ENCODE measurements at regions of chr6 and their contacts with region 1.

Region 1: GRCh38 chr6:89819336-89820130 is at the start of gene MDN1:
- DNase-seq: peak; percentile 80 to 90 (median 89)
- H3K4me3 ChIP-seq: peak within 1 kb of the TSS; percentile 85
- H3K4me3 Mint-ChIP-seq: peak within 1 kb of the TSS; percentile 88 to 98 (median 96)
- H3K27ac ChIP-seq: peak within 1 kb of the TSS; percentile 78
- H3K27ac Mint-ChIP-seq: peak within 1 kb of the TSS; percentile 90 to 98 (median 95)
- H3K4me1 ChIP-seq: peaks cover 16% of the 10 kb centered on the region
- H3K4me1 Mint-ChIP-seq: peaks cover 28 to 42% (median 40%) of the 10 kb centered on the region in 3 donors
- H3K27me3 ChIP-seq: no peaks in the 10 kb centered on the region
- H3K27me3 Mint-ChIP-seq: peaks cover 0 to 2% of the 10 kb centered on the region in 2 donors
- total RNA-seq, gene MDN1: 63.3 to 63.6 TPM

Region 2: DNA sequence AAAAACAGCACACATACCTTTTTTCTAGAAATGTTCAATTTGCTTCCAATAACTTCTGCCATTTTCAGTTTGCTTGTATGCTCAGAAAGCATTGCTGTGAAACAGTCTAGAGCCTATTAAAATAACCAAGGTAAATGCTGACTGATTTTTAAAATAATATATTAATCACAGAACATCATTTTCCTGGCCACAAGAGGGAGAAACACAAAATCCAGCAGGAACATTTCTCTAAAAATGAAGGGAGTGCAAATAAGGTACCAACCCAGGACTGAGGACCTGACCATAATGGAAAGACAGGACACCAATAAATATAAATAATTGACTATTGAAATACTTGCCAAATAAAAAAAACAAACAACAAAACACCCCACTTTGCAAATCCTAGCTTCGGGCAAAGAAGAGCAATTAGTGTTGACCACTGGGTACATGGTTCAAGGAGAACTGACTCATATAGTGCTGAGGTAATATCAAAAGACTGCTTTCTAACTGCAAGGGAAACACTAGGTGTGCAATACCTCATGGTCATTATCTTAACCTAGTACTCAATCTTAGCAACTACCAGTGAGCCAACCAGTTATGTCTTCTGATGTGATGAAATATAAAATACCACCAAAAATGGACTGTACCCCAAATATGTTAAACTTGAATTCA is 42.8 kb before region 1 on chr6:
- CTCF ChIA-PET with region 1: no interaction called
- POLR2A ChIA-PET with region 1: no interaction called
- DNase-seq: no peak
- H3K4me3 ChIP-seq: no peak overlapping the region
- H3K4me3 Mint-ChIP-seq: no peak overlapping the region
- H3K27ac ChIP-seq: no peak overlapping the region
- H3K27ac Mint-ChIP-seq: no peak overlapping the region
- H3K4me1 ChIP-seq: no peaks in the 10 kb centered on the region
- H3K4me1 Mint-ChIP-seq: no peaks in the 10 kb centered on the region
- H3K27me3 ChIP-seq: no peaks in the 10 kb centered on the region
- H3K27me3 Mint-ChIP-seq: no peaks in the 10 kb centered on the region

Region 3: DNA sequence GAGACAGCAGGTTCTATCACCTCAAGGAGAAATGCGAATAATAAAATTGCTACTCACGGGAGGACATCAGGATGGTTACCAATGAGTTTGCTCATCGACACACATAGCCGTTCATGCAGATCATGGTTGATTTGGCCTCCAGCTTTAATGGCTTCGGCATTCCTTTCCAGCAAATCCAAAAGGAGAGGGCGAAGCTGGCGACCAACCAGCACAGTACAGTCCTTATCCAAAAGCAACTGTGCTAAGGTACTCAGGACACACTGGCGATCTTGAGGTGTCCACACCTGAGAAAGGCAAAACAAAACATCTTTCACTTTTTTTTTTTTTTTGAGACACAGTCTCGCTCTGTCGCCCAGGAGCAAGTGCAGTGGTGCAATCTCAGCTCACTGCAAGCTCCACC is 16.3 kb before region 1 on chr6:
- CTCF ChIA-PET with region 1: no interaction called
- POLR2A ChIA-PET with region 1: no interaction called
- DNase-seq: no peak
- H3K4me3 ChIP-seq: no peak overlapping the region
- H3K4me3 Mint-ChIP-seq: no peak overlapping the region
- H3K27ac ChIP-seq: no peak overlapping the region
- H3K27ac Mint-ChIP-seq: no peak overlapping the region
- H3K4me1 ChIP-seq: no peaks in the 10 kb centered on the region
- H3K4me1 Mint-ChIP-seq: peaks cover 10 to 28% (median 16%) of the 10 kb centered on the region in 3 donors
- H3K27me3 ChIP-seq: no peaks in the 10 kb centered on the region
- H3K27me3 Mint-ChIP-seq: no peaks in the 10 kb centered on the region

Region 4: GRCh38 chr6:89829591-89830385 is 10.3 kb after region 1 on chr6 and contains the start of gene CASP8AP2:
- CTCF ChIA-PET with region 1: interaction called, 21 read pairs
- POLR2A ChIA-PET with region 1: interaction called, 41 read pairs
- DNase-seq: peak; percentile 90 to 97 (median 95)
- H3K4me3 ChIP-seq: peak within 1 kb of the TSS; percentile 93
- H3K4me3 Mint-ChIP-seq: peak within 1 kb of the TSS; percentile 96 to 100 (median 99)
- H3K27ac ChIP-seq: peak within 1 kb of the TSS; percentile 81
- H3K27ac Mint-ChIP-seq: peak within 1 kb of the TSS; percentile 67 to 99 (median 95)
- H3K4me1 ChIP-seq: peaks cover 25% of the 10 kb centered on the region
- H3K4me1 Mint-ChIP-seq: peaks cover 32 to 44% (median 37%) of the 10 kb centered on the region in 3 donors
- H3K27me3 ChIP-seq: no peaks in the 10 kb centered on the region
- H3K27me3 Mint-ChIP-seq: peaks cover 0 to 1% of the 10 kb centered on the region in 2 donors
- total RNA-seq, gene CASP8AP2: 30.8 to 31.3 TPM

Region 5: DNA sequence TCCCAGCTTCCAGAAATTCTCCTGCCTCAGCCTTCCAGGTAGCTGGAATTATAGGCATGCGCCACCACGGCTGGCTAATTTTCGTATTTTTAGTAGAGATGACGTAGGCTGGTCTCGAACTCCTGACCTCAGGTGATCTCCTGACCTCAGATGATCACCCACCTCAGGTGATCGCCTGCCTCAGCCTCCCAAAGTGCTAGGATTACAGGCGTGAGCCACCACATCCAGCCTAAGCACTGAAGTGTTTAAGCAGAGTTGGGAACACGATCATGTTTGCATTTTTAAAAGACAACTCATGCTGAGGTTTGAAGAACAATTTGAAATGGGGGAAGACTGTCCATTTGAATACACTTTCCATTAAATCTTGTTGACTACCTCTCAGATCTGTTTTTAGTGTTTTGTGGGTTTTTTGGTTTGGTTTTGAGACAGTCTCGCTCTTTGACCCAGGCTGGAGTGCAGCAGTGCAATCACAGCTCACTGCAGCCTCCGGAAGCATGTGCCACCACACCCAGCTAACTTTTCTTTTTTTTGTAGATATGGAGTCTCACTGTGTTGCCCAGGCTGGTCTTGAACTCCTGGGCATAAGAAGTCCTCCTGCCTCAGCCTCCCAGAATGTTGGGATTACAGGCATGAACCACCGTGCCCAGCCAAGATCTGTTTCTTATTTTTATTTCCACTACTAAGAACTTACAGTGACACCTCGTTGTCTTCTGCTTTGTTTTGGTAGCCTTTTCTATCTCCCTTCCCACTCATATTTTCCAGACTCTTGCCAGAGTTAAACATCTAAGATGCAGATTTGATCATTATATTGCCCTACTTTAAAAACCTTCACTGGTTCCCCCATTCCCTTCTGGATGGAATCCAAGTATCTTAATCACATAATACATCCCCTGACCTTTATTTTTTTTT is 15.6 kb after region 1 on chr6:
- CTCF ChIA-PET with region 1: interaction called, 3 read pairs
- POLR2A ChIA-PET with region 1: interaction called, 41 read pairs
- DNase-seq: peak in 4 of 5 donors; percentile 6 to 63 (median 43)
- H3K4me3 ChIP-seq: peak overlapping the region; percentile 21
- H3K4me3 Mint-ChIP-seq: peak overlapping the region; percentile 66 to 86 (median 77)
- H3K27ac ChIP-seq: no peak overlapping the region
- H3K27ac Mint-ChIP-seq: peak overlapping the region; percentile 68 to 94 (median 90)
- H3K4me1 ChIP-seq: peaks cover 47% of the 10 kb centered on the region
- H3K4me1 Mint-ChIP-seq: peaks cover 57 to 77% (median 73%) of the 10 kb centered on the region in 3 donors
- H3K27me3 ChIP-seq: no peaks in the 10 kb centered on the region
- H3K27me3 Mint-ChIP-seq: peaks cover 0 to 1% of the 10 kb centered on the region in 2 donors

Region 6: GRCh38 chr6:89862273-89862672 is 42.7 kb after region 1 on chr6:
- CTCF ChIA-PET with region 1: no interaction called
- POLR2A ChIA-PET with region 1: no interaction called
- DNase-seq: no peak
- H3K4me3 ChIP-seq: no peak overlapping the region
- H3K4me3 Mint-ChIP-seq: no peak overlapping the region
- H3K27ac ChIP-seq: no peak overlapping the region
- H3K27ac Mint-ChIP-seq: peak overlapping the region in 2 of 8 donors; percentile 48 to 55
- H3K4me1 ChIP-seq: no peaks in the 10 kb centered on the region
- H3K4me1 Mint-ChIP-seq: peaks cover 2 to 22% (median 6%) of the 10 kb centered on the region in 3 donors
- H3K27me3 ChIP-seq: no peaks in the 10 kb centered on the region
- H3K27me3 Mint-ChIP-seq: no peaks in the 10 kb centered on the region

Measured in CD8-positive, alpha-beta memory T cell (primary cell).